Dorsolateral prefrontal cortex (tissue), 120 donors: ENCODE measurements at regions of chr16 and their contacts with region 1.

Region 1: DNA sequence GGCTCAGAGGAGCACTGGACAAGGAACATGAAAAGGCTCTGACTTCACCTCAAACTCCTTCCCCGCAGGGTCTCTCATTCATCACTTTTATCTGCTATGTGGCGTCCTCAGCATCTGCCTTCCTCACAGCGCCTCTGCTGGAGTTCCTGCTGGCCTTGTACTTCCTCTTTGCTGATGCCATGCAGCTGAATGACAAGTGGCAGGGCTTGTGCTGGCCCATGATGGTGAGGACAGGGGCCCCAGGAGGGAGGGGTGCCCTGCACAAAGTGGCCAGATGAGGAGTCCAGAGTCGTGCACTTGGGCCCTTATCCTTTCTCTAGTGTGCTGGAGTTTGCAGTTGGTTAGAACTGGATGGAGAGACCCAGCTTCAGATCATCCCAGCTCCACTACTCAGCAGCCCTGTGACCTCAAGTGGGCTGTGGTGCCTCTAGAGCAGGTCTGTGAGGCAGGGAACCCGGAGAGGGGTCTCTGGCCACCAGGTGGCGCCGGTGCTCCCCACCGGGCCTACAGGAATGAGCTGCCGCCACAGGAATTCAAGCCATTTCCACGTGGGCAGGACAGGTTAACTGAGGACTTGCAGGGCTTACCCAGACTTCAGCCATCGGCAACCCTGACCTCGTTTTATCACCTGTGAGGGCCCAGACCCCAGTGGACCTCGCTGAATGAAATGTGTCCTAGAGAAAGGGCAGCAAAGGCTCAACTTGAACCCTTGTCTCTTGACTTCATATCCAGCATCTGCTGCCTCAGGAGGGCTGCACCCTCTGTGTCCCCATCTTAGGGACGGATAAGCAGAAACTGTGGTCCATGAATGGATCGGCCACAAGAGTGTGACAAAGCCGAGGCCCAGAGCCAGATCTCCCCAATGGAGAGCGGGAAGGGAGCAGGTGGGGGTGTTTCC is 4.0 kb downstream of the CMTM3 start:
- DNase-seq: peak; percentile 70 to 88 (median 83)
- H3K4me3 ChIP-seq: no peak overlapping the region
- H3K27ac ChIP-seq: peak overlapping the region in 3 of 59 donors; percentile 4 to 44 (median 23)
- H3K27me3 ChIP-seq: no peaks in the 10 kb centered on the region
- CTCF ChIP-seq: peak; percentile 64 to 94 (median 86)

Region 2: GRCh38 chr16:66406534-66407221 is 201.8 kb before region 1 on chr16:
- intact Hi-C with region 1: loop called (anchors 5 kb)
- DNase-seq: peak; percentile 78 to 89 (median 89)
- H3K4me3 ChIP-seq: peak overlapping the region; percentile 51 to 98 (median 72)
- H3K27ac ChIP-seq: peak overlapping the region in 44 of 59 donors; percentile 3 to 87 (median 68)
- H3K27me3 ChIP-seq: peaks cover 0 to 10% (median 0%) of the 10 kb centered on the region in 45 donors
- CTCF ChIP-seq: peak; percentile 79 to 99 (median 92)

Region 3: DNA sequence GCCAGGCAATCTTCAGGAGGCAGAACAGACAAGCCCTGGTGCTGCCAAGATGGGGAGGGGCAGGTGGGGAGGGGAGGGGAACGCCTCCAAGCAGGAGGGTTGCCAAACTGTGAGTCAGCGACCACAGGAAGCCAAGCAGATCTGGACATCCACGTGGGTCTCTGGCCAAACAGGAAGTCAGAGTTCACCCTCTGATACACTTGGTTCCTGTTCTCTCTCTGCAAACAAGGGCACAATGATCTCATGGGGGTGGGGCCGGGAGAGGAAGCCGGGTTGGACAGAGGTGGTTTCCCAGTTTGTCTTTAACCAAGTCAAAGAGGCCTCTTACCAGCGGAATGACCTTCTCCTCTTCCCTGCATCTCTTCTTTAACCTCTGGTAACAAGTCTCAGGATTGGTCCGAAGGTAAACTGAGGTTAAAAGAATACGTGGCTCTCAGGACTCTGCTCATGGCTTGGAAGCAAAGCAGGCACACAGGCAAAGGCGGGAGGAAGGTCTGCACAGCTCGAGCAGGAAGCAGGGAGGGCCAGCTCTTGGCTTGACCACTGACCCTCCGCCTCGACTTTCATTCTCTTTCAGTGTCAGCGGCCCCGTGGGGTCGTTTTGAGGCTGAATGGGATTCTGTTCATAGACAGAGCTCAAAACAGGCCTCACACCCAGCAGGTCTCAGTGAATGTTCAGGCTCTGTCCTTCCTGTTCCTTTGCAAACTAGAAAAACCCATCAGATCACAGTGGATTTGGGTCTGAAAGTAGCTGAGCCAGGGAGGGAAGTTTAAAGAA is 91.5 kb before region 1 on chr16:
- intact Hi-C with region 1: loop called in 1 of 2 experiments (anchors 10 kb)
- DNase-seq: peak; percentile 43 to 95 (median 92)
- H3K4me3 ChIP-seq: peak overlapping the region in 46 of 59 donors; percentile 1 to 58 (median 34)
- H3K27ac ChIP-seq: peak overlapping the region; percentile 83 to 100 (median 98)
- H3K27me3 ChIP-seq: no peaks in the 10 kb centered on the region
- CTCF ChIP-seq: peak in 15 of 56 donors; percentile 4 to 37 (median 18)

Region 4: GRCh38 chr16:66639091-66639885 is 30.8 kb after region 1 on chr16:
- intact Hi-C with region 1: no loop called
- DNase-seq: no peak
- H3K4me3 ChIP-seq: no peak overlapping the region
- H3K27ac ChIP-seq: no peak overlapping the region
- H3K27me3 ChIP-seq: no peaks in the 10 kb centered on the region
- CTCF ChIP-seq: no peak

Region 5: GRCh38 chr16:66696669-66697630 is 88.5 kb after region 1 on chr16 and contains the start of gene CMTM4:
- intact Hi-C with region 1: loop called in 1 of 2 experiments (anchors 10 kb)
- DNase-seq: peak; percentile 59 to 92 (median 80)
- H3K4me3 ChIP-seq: peak within 1 kb of the TSS; percentile 64 to 95 (median 84)
- H3K27ac ChIP-seq: peak within 1 kb of the TSS; percentile 25 to 95 (median 84)
- H3K27me3 ChIP-seq: no peaks in the 10 kb centered on the region
- CTCF ChIP-seq: peak in 29 of 56 donors; percentile 4 to 57 (median 32)
- total RNA-seq, gene CMTM4: 82.8 to 193 (median 119) TPM